Aorta (tissue), 5 donors: ENCODE measurements at regions of chr6 and their contacts with region 1.

Region 1: GRCh38 chr6:26196846-26197648 is 109.8 kb downstream of the HFE start:
- DNase-seq: peak; percentile 84 to 90
- ATAC-seq: peak; percentile 83
- H3K4me3 ChIP-seq: peak overlapping the region; percentile 33 to 72
- H3K27ac ChIP-seq: peak overlapping the region; percentile 31 to 98
- H3K4me1 ChIP-seq: no peaks in the 10 kb centered on the region
- H3K27me3 ChIP-seq: peaks cover 0 to 2% of the 10 kb centered on the region in 2 donors

Region 2: DNA sequence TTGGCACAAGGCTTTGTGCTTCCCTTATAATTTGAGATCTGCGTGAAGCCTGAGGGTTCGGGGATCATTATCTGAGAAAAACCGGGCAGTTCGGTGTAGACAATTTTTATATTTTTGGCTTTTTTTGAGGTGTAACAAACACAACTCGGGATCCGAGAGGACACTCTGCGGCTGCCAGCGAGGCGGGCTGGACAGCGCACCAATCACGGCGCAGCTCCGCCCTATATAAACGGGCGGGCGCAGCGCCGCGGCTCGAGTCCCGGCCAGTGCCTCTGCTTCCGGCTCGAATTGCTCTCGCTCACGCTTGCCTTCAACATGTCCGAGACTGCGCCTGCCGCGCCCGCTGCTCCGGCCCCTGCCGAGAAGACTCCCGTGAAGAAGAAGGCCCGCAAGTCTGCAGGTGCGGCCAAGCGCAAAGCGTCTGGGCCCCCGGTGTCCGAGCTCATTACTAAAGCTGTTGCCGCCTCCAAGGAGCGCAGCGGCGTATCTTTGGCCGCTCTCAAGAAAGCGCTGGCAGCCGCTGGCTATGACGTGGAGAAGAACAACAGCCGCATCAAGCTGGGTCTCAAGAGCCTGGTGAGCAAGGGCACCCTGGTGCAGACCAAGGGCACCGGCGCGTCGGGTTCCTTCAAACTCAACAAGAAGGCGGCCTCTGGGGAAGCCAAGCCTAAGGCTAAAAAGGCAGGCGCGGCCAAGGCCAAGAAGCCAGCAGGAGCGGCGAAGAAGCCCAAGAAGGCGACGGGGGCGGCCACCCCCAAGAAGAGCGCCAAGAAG is 40.8 kb before region 1 on chr6:
- intact Hi-C with region 1: loop called in 1 of 2 experiments (anchors 5 kb)
- DNase-seq: peak; percentile 93 to 96
- ATAC-seq: peak; percentile 94
- H3K4me3 ChIP-seq: peak overlapping the region; percentile 78 to 96
- H3K27ac ChIP-seq: peak overlapping the region; percentile 93 to 99
- H3K4me1 ChIP-seq: peaks cover 0 to 4% of the 10 kb centered on the region in 2 donors
- H3K27me3 ChIP-seq: peaks cover 0 to 4% of the 10 kb centered on the region in 2 donors

Region 3: GRCh38 chr6:26270903-26271667 is 74.0 kb after region 1 on chr6:
- intact Hi-C with region 1: loop called in 1 of 2 experiments (anchors 5 kb)
- DNase-seq: peak; percentile 64 to 79
- ATAC-seq: peak; percentile 82
- H3K4me3 ChIP-seq: peak overlapping the region in 1 of 2 donors; percentile 18
- H3K27ac ChIP-seq: peak overlapping the region in 1 of 2 donors; percentile 98
- H3K4me1 ChIP-seq: no peaks in the 10 kb centered on the region
- H3K27me3 ChIP-seq: no peaks in the 10 kb centered on the region

Region 4: DNA sequence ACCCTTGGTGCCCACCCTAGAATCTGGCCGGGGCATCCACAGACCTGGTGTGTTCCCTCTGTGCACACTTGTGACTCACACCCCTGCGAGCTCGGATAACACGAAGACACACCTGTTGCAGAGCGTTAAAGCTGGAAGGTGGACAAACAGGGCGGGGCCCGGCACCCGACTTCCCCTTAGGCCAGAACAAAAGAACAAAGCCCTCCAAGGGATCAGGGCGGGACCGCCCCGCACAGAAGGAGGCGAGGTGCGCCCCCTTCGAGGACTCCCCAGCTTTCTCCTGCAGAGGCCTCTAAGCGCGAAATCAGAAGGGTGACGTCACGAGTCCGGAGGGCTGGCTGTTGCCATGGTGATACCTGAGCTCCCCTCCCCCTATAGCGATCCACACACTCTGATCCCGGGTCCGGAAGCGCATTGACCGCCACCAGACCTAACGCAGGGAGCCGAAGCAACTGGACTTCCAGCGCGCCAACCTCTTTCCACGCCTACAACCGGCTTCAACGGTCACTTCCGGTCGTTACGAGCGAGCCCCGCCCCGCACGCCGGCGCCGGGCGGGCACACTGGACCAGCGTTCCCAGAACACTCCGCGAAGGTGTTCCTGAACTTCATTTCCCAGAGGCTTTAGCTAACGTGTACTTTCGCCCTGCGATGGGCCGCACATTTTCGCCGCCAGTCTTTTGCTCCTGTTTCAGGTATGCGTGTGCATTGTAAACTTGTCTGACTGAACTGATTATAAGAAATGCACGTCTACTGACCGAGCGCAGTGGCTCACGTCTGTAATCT is 1275.8 kb after region 1 on chr6 and contains the start of gene ZNF184:
- intact Hi-C with region 1: loop called in 1 of 2 experiments (anchors 10 kb)
- DNase-seq: peak; percentile 97 to 98
- ATAC-seq: peak; percentile 99
- H3K4me3 ChIP-seq: peak within 1 kb of the TSS; percentile 49 to 66
- H3K27ac ChIP-seq: peak within 1 kb of the TSS in 1 of 2 donors; percentile 7
- H3K4me1 ChIP-seq: no peaks in the 10 kb centered on the region
- H3K27me3 ChIP-seq: no peaks in the 10 kb centered on the region
- total RNA-seq, gene ZNF184: 5.3 to 8.0 TPM